ENCODE measurements at regions of chr13 and their contacts with region 1.

Region 1: DNA sequence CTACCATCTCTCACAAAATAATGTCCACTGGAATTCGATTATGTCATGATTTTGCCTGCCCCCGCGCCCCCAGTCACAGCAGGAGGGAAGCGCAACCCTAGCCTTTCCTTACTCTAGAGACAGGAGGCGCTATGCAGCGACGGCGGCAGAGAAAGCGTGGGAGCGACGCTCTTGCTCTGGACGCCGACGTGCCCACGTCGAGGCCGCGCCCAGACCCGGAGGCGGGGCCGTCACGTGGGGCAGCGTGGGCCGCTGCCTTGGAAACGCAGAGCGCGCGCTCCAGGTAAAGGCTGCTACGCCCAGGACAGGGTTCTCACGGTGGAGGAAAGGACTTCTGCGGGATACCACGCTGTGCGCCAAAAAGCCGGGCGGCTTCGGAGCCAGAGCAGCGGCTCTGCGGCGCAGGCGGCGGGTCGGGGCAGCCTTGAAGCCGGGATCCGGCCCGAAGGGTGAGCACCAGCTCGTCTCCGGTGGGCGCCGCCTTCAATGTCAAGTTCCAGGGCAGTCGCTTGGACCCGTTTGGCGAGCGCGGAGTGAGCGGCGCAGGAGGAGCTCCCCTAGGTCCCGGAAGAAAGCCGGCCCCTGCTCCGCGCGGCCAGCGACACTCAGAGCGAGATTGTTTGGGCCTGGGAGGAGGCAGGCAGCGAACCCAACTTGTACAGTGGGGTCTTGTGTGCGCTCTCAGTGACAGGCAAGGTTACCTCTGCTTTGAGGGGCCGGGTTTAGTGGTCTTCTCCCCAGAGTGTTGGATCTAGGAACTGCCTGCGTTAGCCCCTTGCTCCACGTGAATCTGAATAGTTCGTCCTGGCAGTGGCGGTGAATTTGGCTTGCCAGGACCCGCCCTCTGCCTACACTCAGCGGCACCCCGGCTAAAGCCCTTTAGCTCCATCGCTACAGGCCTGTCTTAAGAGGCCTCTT is 121.7 kb downstream of the MRPL57 start:
- DNase-seq: peak; percentile 70 to 95 (median 81)
- ATAC-seq: peak; percentile 94
- H3K4me3 ChIP-seq: peak overlapping the region; percentile 81
- H3K4me3 Mint-ChIP-seq: peak overlapping the region; percentile 90
- H3K27ac ChIP-seq: peak overlapping the region in 1 of 2 donors; percentile 53
- H3K27ac Mint-ChIP-seq: peak overlapping the region; percentile 34
- H3K4me1 ChIP-seq: peaks cover 19% of the 10 kb centered on the region
- H3K4me1 Mint-ChIP-seq: peaks cover 26% of the 10 kb centered on the region
- H3K27me3 ChIP-seq: no peaks in the 10 kb centered on the region
- H3K27me3 Mint-ChIP-seq: no peaks in the 10 kb centered on the region
- CTCF ChIP-seq: peak; percentile 95

Region 2: DNA sequence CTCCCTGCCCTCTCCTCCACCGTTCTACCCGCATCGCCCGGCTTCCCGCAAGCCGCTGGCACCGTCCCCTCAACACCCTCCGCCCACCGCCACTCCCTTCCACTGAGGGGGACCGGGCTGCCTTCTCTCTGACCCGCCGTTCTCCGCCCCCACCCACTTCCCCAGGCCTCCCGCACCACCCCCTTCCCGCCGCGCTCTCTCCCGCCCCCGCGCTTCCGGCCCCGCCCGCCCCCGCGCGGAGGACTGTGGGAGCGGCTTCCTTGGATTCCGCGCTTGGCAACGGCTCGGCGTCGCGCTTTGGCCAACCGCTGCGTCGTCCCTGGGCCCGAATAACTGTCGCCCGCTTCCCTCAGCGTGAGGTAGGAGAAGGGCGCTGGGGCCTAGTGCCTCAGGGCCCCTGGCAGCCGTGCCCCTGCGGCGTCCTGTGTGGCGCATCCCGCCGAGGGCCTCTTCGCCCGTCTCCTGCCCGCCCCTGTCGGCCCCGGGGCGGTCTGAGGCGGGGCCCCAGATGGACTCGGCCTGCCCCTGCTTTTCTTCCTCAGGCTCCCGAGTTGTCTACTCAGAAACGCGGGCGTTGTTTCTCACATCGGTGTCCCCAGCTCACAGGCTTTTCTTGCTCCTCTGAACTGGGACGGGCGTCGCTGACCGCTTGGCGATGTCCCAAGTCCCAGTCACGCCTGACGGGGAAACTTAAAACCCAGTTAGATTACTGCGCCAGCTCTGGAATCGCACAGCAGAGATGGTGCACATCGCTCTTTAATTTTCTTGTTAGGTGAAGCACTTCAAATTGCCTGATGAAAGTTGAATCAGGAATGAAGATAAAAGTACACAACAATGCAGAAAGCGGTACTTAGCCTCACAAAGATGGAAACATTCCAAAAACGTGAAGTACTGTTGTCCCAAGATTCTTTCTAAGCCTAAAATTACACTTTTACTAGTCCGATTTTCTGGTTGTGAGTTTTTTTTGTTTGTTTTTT is 731.0 kb before region 1 on chr13 and contains the start of gene IFT88:
- CTCF ChIA-PET with region 1: no interaction called
- POLR2A ChIA-PET with region 1: no interaction called
- intact Hi-C with region 1: loop called in 1 of 2 experiments (anchors 10 kb)
- DNase-seq: peak; percentile 57 to 87 (median 78)
- ATAC-seq: peak; percentile 87
- H3K4me3 ChIP-seq: peak within 1 kb of the TSS; percentile 69
- H3K4me3 Mint-ChIP-seq: peak within 1 kb of the TSS; percentile 96
- H3K27ac ChIP-seq: peak within 1 kb of the TSS; percentile 53 to 60
- H3K27ac Mint-ChIP-seq: peak within 1 kb of the TSS; percentile 82
- H3K4me1 ChIP-seq: peaks cover 15% of the 10 kb centered on the region
- H3K4me1 Mint-ChIP-seq: peaks cover 19% of the 10 kb centered on the region
- H3K27me3 ChIP-seq: no peaks in the 10 kb centered on the region
- H3K27me3 Mint-ChIP-seq: no peaks in the 10 kb centered on the region
- CTCF ChIP-seq: no peak
- total RNA-seq, gene IFT88: 9.0 to 9.5 TPM

Region 3: GRCh38 chr13:20945952-20946383 is 352.2 kb before region 1 on chr13:
- CTCF ChIA-PET with region 1: no interaction called
- POLR2A ChIA-PET with region 1: no interaction called
- intact Hi-C with region 1: loop called in 1 of 2 experiments (anchors 10 kb)
- DNase-seq: peak in 2 of 14 experiments; percentile 23
- ATAC-seq: peak; percentile 26
- H3K4me3 ChIP-seq: no peak overlapping the region
- H3K4me3 Mint-ChIP-seq: peak overlapping the region; percentile 65
- H3K27ac ChIP-seq: no peak overlapping the region
- H3K27ac Mint-ChIP-seq: no peak overlapping the region
- H3K4me1 ChIP-seq: peaks cover 7% of the 10 kb centered on the region
- H3K4me1 Mint-ChIP-seq: peaks cover 10% of the 10 kb centered on the region
- H3K27me3 ChIP-seq: peaks cover 5 to 10% of the 10 kb centered on the region in 2 experiments
- H3K27me3 Mint-ChIP-seq: peaks cover 62% of the 10 kb centered on the region
- CTCF ChIP-seq: no peak

Region 4: DNA sequence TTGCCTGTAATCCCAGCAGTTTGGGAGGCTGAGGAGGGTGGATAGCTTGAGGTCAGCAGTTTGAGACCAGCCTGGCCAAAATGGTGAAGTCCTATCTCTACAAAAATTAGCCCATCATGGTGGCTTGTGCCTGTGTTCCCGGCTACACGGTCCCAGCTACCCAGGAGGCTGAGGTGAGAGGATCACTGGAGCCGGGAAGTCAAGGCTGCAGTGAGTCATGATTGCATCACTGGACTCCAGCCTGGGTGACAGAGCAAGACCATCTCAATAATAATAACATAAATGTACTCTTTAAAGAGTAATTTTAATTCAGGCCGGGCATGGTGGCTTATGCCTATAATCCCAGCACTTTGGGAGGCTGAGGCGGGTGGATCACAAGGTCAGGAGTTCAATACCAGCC is 160.5 kb before region 1 on chr13:
- CTCF ChIA-PET with region 1: no interaction called
- POLR2A ChIA-PET with region 1: no interaction called
- intact Hi-C with region 1: loop called in 1 of 2 experiments (anchors 1 kb)
- DNase-seq: peak in 1 of 14 experiments; percentile 18
- ATAC-seq: no peak
- H3K4me3 ChIP-seq: no peak overlapping the region
- H3K4me3 Mint-ChIP-seq: no peak overlapping the region
- H3K27ac ChIP-seq: no peak overlapping the region
- H3K27ac Mint-ChIP-seq: no peak overlapping the region
- H3K4me1 ChIP-seq: peaks cover 19% of the 10 kb centered on the region
- H3K4me1 Mint-ChIP-seq: peaks cover 27% of the 10 kb centered on the region
- H3K27me3 ChIP-seq: peaks cover 0 to 2% of the 10 kb centered on the region in 2 experiments
- H3K27me3 Mint-ChIP-seq: peaks cover 20% of the 10 kb centered on the region
- CTCF ChIP-seq: no peak

Region 5: GRCh38 chr13:21287331-21287907 is 10.8 kb before region 1 on chr13:
- CTCF ChIA-PET with region 1: no interaction called
- POLR2A ChIA-PET with region 1: no interaction called
- intact Hi-C with region 1: no loop called
- DNase-seq: no peak
- ATAC-seq: no peak
- H3K4me3 ChIP-seq: no peak overlapping the region
- H3K4me3 Mint-ChIP-seq: no peak overlapping the region
- H3K27ac ChIP-seq: no peak overlapping the region
- H3K27ac Mint-ChIP-seq: no peak overlapping the region
- H3K4me1 ChIP-seq: no peaks in the 10 kb centered on the region
- H3K4me1 Mint-ChIP-seq: no peaks in the 10 kb centered on the region
- H3K27me3 ChIP-seq: peaks cover 4 to 7% of the 10 kb centered on the region in 2 experiments
- H3K27me3 Mint-ChIP-seq: peaks cover 17% of the 10 kb centered on the region
- CTCF ChIP-seq: no peak

Region 6: GRCh38 chr13:21402586-21403228 is 104.5 kb after region 1 on chr13:
- CTCF ChIA-PET with region 1: interaction called, 3 read pairs
- POLR2A ChIA-PET with region 1: no interaction called
- intact Hi-C with region 1: loop called in 1 of 2 experiments (anchors 10 kb)
- DNase-seq: peak in 2 of 14 experiments; percentile 17 to 26
- ATAC-seq: no peak
- H3K4me3 ChIP-seq: no peak overlapping the region
- H3K4me3 Mint-ChIP-seq: no peak overlapping the region
- H3K27ac ChIP-seq: no peak overlapping the region
- H3K27ac Mint-ChIP-seq: peak overlapping the region; percentile 50
- H3K4me1 ChIP-seq: peaks cover 4% of the 10 kb centered on the region
- H3K4me1 Mint-ChIP-seq: peaks cover 36% of the 10 kb centered on the region
- H3K27me3 ChIP-seq: no peaks in the 10 kb centered on the region
- H3K27me3 Mint-ChIP-seq: no peaks in the 10 kb centered on the region
- CTCF ChIP-seq: no peak

Region 7: GRCh38 chr13:21476893-21477472 is 178.8 kb after region 1 on chr13:
- CTCF ChIA-PET with region 1: interaction called, 16 read pairs
- POLR2A ChIA-PET with region 1: interaction called, 5 read pairs
- intact Hi-C with region 1: loop called (anchors 1 kb)
- DNase-seq: peak; percentile 64 to 89 (median 72)
- ATAC-seq: peak; percentile 80
- H3K4me3 ChIP-seq: peak overlapping the region; percentile 37
- H3K4me3 Mint-ChIP-seq: peak overlapping the region; percentile 78
- H3K27ac ChIP-seq: no peak overlapping the region
- H3K27ac Mint-ChIP-seq: no peak overlapping the region
- H3K4me1 ChIP-seq: peaks cover 6% of the 10 kb centered on the region
- H3K4me1 Mint-ChIP-seq: peaks cover 17% of the 10 kb centered on the region
- H3K27me3 ChIP-seq: no peaks in the 10 kb centered on the region
- H3K27me3 Mint-ChIP-seq: peaks cover 10% of the 10 kb centered on the region
- CTCF ChIP-seq: peak; percentile 97

Measured in CD4-positive, alpha-beta T cell (primary cell).